A549 (cell line): ENCODE measurements at regions of chr1 and their contacts with region 1.

Region 1: GRCh38 chr1:113072757-113073478 is at the start of gene LRIG2:
- DNase-seq: peak; percentile 80 to 97
- ATAC-seq: peak; percentile 99
- H3K4me3 ChIP-seq: peak within 1 kb of the TSS; percentile 94
- H3K27ac ChIP-seq: peak within 1 kb of the TSS; percentile 97
- H3K4me1 ChIP-seq: peaks cover 8% of the 10 kb centered on the region; the same call in 2 of the 3 replicates
- CTCF ChIP-seq: peak; percentile 94
- EP300 ChIP-seq: no peak
- POLR2A ChIP-seq: peak; percentile 95
- RAD21 ChIP-seq: peak; percentile 45 to 69
- polyA plus RNA-seq, gene LRIG2: 7.4 and 9.3 TPM in 2 replicates

Region 2: GRCh38 chr1:112882271-112882744 is 190.6 kb before region 1 on chr1:
- CTCF ChIA-PET with region 1: interaction called, 24 read pairs
- POLR2A ChIA-PET with region 1: interaction called, 3 read pairs
- DNase-seq: no peak
- ATAC-seq: no peak
- H3K4me3 ChIP-seq: no peak overlapping the region
- H3K27ac ChIP-seq: no peak overlapping the region
- H3K4me1 ChIP-seq: no peaks in the 10 kb centered on the region
- CTCF ChIP-seq: no peak
- EP300 ChIP-seq: no peak
- POLR2A ChIP-seq: no peak
- RAD21 ChIP-seq: no peak

Region 3: DNA sequence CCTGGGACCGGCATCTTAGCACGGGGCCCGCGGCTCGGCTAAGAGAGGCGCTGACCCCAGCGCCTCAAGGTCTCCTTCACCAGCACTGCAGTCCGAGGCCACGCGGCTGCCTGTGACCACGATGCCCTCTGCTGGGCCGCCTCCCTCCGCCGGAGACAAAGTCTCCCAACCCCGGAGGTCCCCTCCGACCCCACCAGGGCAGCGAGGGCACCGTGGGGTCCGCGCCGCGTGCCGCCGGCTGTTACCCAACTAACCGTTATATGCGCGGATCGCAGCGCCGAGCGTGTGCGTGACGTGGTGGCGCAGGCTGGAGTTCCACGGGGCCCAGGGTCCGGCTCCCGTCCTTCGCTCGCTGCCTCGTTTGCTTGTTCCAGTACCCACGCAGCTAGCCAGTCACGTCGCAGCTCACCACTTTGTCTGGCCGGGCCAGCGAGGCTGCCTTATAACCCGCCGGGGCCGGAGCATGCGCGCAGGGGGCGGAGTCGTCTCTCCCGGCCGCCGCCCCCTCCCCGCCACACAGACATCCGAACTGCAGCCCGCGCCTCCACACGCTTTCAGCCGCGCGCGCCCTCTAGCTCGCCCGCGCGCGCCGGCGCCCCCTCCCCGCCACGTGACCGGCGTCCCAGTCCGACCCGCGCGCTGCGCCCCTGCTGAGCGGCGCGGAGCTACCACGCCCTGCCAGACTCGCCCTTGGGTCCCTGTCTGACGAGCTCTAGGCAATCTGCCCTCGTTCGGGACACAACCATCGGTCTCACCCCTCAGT is 117.0 kb before region 1 on chr1 and contains the start of gene SLC16A1:
- CTCF ChIA-PET with region 1: interaction called, 4 read pairs
- POLR2A ChIA-PET with region 1: interaction called, 22 read pairs
- DNase-seq: peak; percentile 67 to 92
- ATAC-seq: peak; percentile 82 to 89
- H3K4me3 ChIP-seq: peak within 1 kb of the TSS; percentile 66
- H3K27ac ChIP-seq: peak within 1 kb of the TSS; percentile 93 to 98
- H3K4me1 ChIP-seq: peaks cover 27% of the 10 kb centered on the region
- CTCF ChIP-seq: peak; percentile 46
- EP300 ChIP-seq: no peak
- POLR2A ChIP-seq: peak; percentile 99
- RAD21 ChIP-seq: peak; percentile 28 to 64; a peak in 3 of 5 replicates
- polyA plus RNA-seq, gene SLC16A1: 67.9 and 70.2 TPM in 2 replicates

Region 4: GRCh38 chr1:113021430-113022086 is 51.4 kb before region 1 on chr1:
- CTCF ChIA-PET with region 1: no interaction called
- POLR2A ChIA-PET with region 1: no interaction called
- DNase-seq: peak in 1 of 2 experiments; percentile 7
- ATAC-seq: peak in 1 of 2 experiments; percentile 30; a peak in 3 of 6 replicates
- H3K4me3 ChIP-seq: no peak overlapping the region
- H3K27ac ChIP-seq: peak overlapping the region in 1 of 2 experiments; percentile 22; a peak in 1 of 6 replicates
- H3K4me1 ChIP-seq: no peaks in the 10 kb centered on the region; the same call in 2 of the 3 replicates
- CTCF ChIP-seq: no peak
- EP300 ChIP-seq: no peak
- POLR2A ChIP-seq: no peak
- RAD21 ChIP-seq: no peak

Region 5: GRCh38 chr1:113042285-113043143 is 30.4 kb before region 1 on chr1:
- CTCF ChIA-PET with region 1: interaction called, 14 read pairs
- POLR2A ChIA-PET with region 1: no interaction called
- DNase-seq: peak; percentile 55 to 57
- ATAC-seq: peak; percentile 91 to 96
- H3K4me3 ChIP-seq: no peak overlapping the region
- H3K27ac ChIP-seq: 0 out of 6 replicates have a peak overlapping the region, but pooled peaks of 1 of the 2 experiments have one; percentile 4
- H3K4me1 ChIP-seq: peaks cover 4% of the 10 kb centered on the region; the same call in 1 of the 3 replicates
- CTCF ChIP-seq: peak; percentile 52
- EP300 ChIP-seq: no peak
- POLR2A ChIP-seq: no peak
- RAD21 ChIP-seq: peak; percentile 73 to 85

Region 6: DNA sequence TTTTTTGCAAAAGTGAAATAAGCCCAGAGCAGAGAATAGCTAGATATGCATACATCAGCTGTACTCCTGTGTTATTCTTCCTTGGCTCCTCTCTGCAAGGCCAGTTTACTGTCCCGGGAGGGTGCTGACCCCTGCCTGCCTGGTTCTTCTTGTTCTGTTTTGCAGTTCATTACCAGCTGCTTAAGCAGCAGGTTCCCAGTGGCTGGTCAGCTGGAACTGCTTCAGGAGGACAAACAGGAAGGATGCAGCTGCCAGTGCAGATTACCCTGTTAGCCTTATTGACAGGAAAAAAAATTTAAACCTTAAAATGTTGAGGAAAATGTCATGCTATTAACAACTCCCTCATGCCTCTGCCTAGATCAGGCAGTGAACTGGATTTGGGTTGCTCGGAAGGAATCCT is 15.9 kb before region 1 on chr1:
- CTCF ChIA-PET with region 1: interaction called, 25 read pairs
- POLR2A ChIA-PET with region 1: no interaction called
- DNase-seq: no peak
- ATAC-seq: no peak
- H3K4me3 ChIP-seq: no peak overlapping the region
- H3K27ac ChIP-seq: no peak overlapping the region
- H3K4me1 ChIP-seq: no peaks in the 10 kb centered on the region
- CTCF ChIP-seq: no peak
- EP300 ChIP-seq: no peak
- POLR2A ChIP-seq: no peak
- RAD21 ChIP-seq: no peak

Region 7: DNA sequence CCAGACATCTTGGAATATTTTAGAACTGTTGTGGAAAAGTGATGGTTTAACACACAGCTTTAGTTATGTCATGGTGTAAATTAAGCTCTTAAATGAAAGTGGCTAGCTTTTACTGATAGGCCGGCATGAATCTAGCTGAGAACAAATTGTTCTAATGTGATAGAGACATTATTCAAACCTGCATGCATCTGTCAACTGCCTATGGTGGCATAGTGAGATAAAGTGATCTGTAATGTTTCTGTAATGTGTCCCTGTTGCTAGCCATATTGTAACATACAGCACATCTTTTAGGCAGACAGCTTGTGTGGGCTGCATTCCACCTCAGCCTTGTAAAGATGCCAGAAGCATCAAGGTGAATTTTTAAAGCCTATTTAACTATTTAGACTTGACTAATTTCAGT is 16.1 kb after region 1 on chr1:
- CTCF ChIA-PET with region 1: interaction called, 11 read pairs
- POLR2A ChIA-PET with region 1: interaction called, 4 read pairs
- DNase-seq: no peak
- ATAC-seq: no peak
- H3K4me3 ChIP-seq: no peak overlapping the region
- H3K27ac ChIP-seq: no peak overlapping the region
- H3K4me1 ChIP-seq: peaks cover 3% of the 10 kb centered on the region; the same call in 1 of the 3 replicates
- CTCF ChIP-seq: no peak
- EP300 ChIP-seq: no peak
- POLR2A ChIP-seq: no peak
- RAD21 ChIP-seq: no peak